Right ventricle myocardium superior (tissue), 1 donor: ENCODE measurements at regions of chr6 and their contacts with region 1.

Region 1: GRCh38 chr6:108294727-108295625 is at the start of gene AFG1L:
- DNase-seq: peak; percentile 97
- ATAC-seq: peak; percentile 99
- total RNA-seq, gene AFG1L: 12.6 TPM

Region 2: DNA sequence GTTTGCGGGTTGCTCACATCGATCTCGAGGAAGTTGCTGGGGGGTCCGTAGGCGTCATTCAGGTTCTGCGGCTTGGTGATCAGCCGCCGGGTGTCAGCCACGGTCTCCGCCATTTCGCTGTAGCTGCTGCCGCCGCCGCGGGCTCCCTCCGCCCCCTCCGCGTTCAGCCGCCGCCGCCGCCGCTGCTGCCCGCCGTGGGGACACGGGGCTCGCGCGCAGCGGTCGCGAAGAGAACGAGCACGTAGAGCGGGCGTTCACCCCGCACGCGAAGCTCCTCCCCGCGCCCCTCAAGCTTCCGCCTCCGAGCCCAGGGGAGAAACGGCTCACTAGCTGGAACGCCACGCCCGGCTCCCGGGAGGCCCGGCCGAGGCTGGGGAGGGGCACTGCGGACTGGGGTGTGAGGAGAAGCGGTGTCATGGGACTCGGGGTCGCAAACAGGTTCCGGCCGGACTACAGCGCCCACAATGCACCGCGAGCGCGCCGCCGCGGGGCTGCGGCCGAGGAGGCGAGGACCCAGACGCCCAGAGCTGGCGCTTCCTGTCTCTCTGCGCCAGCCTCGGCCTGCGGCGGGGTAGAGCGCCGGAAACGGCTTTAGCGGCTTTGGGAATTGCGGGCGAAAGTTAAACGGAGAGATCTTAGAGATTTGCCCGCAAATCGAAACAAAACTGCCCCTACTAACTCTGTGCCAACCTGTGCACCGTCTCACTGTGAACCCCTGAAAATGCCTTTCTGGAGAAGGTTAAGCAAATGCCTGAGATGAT is 34.0 kb before region 1 on chr6 and contains the start of gene SNX3:
- intact Hi-C with region 1: loop called (anchors 2 kb)
- DNase-seq: peak; percentile 96
- ATAC-seq: peak; percentile 98
- total RNA-seq, gene SNX3: 269 TPM

Region 3: DNA sequence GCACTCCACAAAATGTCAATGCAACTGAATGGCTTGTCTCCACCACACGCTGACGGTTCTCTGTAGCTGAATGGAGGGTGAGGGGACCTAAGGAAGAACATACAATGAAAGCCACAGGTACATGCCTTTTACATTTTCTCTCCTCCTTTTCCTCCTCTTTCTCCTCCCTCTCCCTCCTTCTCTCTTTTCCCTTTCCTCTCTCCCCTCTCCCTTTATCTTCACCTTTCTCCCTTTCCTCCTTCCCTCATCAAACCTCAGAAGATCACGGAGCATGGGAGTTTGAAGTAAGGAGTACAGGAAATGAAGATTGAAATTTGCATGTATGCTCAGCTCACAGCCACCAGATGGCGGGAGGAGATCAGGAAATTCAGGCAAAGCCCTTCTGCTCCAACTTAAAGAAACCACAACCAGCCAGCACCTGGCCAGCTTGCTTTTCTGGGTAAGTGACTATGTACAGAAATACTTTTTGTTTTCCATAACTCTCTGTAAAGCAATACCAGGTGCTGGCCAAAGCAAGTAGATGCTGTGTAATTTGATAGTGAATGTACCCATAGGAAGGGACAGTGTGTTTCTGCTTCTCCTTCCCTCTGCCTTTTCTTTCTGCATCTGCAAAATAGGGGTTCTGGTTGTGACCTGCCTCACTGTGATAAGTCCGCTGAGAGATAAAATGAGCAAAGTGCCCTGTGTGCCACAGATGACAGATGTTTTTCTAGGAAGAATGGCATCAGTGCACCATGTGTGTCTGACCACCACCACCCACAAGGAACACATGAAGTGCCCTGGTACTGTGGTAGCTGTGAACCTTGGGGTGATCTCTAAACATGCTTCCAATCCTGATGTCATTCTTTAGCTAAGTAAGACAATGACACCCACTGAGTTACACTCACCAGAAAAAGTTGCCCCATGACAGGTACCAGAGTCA is 247.1 kb after region 1 on chr6:
- intact Hi-C with region 1: no loop called
- DNase-seq: peak; percentile 67
- ATAC-seq: peak; percentile 91